Common myeloid progenitor, CD34-positive (primary cell): ENCODE measurements at regions of chr20 and their contacts with region 1.

Region 1: GRCh38 chr20:44888226-44889103 is 3.0 kb downstream of the YWHAB start:
- DNase-seq: peak; percentile 26 to 50 (median 45)
- H3K4me3 ChIP-seq: peak overlapping the region in 2 of 7 experiments; percentile 15 to 19
- H3K27ac ChIP-seq: no peak overlapping the region
- H3K4me1 ChIP-seq: peaks cover 12 to 42% (median 28%) of the 10 kb centered on the region in 4 experiments
- H3K27me3 ChIP-seq: no peaks in the 10 kb centered on the region

Region 2: GRCh38 chr20:44901974-44902373 is 13.5 kb after region 1 on chr20:
- CTCF ChIA-PET with region 1: interaction called, 21 read pairs
- POLR2A ChIA-PET with region 1: no interaction called
- DNase-seq: no peak
- H3K4me3 ChIP-seq: no peak overlapping the region
- H3K27ac ChIP-seq: no peak overlapping the region
- H3K4me1 ChIP-seq: peaks cover 0 to 20% (median 15%) of the 10 kb centered on the region in 4 experiments
- H3K27me3 ChIP-seq: no peaks in the 10 kb centered on the region

Region 3: GRCh38 chr20:44909872-44910689 is 21.6 kb after region 1 on chr20 and contains the start of gene PABPC1L:
- CTCF ChIA-PET with region 1: interaction called, 11 read pairs
- POLR2A ChIA-PET with region 1: interaction called, 3 read pairs
- DNase-seq: peak; percentile 22 to 52 (median 29)
- H3K4me3 ChIP-seq: peak within 1 kb of the TSS; percentile 28 to 82 (median 69)
- H3K27ac ChIP-seq: peak within 1 kb of the TSS in 1 of 2 experiments; percentile 52
- H3K4me1 ChIP-seq: peaks cover 3 to 22% (median 15%) of the 10 kb centered on the region in 4 experiments
- H3K27me3 ChIP-seq: no peaks in the 10 kb centered on the region